Astrocyte of the cerebellum (primary cell): ENCODE measurements at regions of chr17 and their contacts with region 1.

Region 1: DNA sequence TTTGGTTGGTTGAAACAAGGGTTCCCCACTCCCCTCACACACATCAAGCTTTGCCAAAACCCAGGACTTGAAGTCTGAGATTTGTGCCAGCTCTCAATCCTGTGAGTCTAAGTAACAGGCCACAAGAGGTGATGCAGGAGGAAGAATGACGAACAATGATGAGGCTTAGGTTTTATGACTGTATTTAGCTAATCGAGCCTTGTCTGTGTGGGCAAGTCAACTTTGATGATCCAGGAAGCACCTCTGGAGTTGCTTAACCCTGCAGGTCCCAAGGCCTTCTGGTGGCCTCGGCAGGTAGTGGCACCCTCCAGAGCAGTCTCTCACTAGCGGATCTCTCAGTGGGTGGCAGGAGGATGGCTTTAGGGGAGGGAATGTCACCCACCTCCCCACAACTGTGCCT is 28.7 kb downstream of the CDK5RAP3 start:
- DNase-seq: no peak
- H3K4me3 ChIP-seq: no peak overlapping the region
- CTCF ChIP-seq: no peak

Region 2: GRCh38 chr17:47949946-47950345 is 49.6 kb before region 1 on chr17:
- in situ Hi-C with region 1: loop called (anchors 5 kb)
- DNase-seq: no peak
- H3K4me3 ChIP-seq: no peak overlapping the region
- CTCF ChIP-seq: no peak

Region 3: GRCh38 chr17:47970704-47971463 is 28.7 kb before region 1 on chr17 and contains the start of gene CDK5RAP3:
- in situ Hi-C with region 1: no loop called
- DNase-seq: peak; percentile 98
- H3K4me3 ChIP-seq: peak within 1 kb of the TSS; percentile 92
- CTCF ChIP-seq: peak; percentile 94